Calu3 (cell line): ENCODE measurements at regions of chr5 and their contacts with region 1.

Region 1: DNA sequence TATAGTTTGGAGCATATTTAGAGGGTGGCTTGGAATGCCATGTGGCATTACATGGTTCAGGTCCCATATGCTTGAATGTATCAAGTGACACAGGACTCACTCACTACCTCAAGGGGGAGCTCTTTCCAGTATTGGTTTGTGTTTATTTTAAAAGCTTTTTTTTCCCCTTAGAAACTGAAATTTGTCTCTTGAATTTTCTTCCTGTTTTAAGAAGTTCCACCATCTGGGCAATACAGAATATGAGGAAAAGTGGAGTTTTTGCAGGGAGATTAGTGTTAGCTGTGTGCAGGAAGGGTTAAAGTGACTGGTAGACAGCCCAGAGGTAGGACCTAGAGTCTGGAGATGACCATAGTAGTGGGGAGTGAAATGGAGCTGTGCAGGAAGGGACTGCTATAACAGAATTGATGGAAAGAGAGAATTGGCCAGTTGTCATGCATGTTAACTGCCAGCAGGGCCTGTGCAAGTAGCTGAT is 36.6 kb downstream of the CTNNA1 start:
- DNase-seq: peak; percentile 12
- H3K4me3 Mint-ChIP-seq: no peak overlapping the region
- H3K27ac Mint-ChIP-seq: no peak overlapping the region
- H3K4me1 Mint-ChIP-seq: peaks cover 43% of the 10 kb centered on the region
- H3K27me3 Mint-ChIP-seq: no peaks in the 10 kb centered on the region
- CTCF ChIP-seq: peak; percentile 52

Region 2: GRCh38 chr5:138832218-138832617 is 42.4 kb after region 1 on chr5:
- CTCF ChIA-PET with region 1: no interaction called
- intact Hi-C with region 1: no loop called
- DNase-seq: no peak
- H3K4me3 Mint-ChIP-seq: no peak overlapping the region
- H3K27ac Mint-ChIP-seq: no peak overlapping the region
- H3K4me1 Mint-ChIP-seq: peaks cover 27% of the 10 kb centered on the region
- H3K27me3 Mint-ChIP-seq: no peaks in the 10 kb centered on the region
- CTCF ChIP-seq: no peak

Region 3: GRCh38 chr5:138844812-138845513 is 55.2 kb after region 1 on chr5:
- CTCF ChIA-PET with region 1: no interaction called
- intact Hi-C with region 1: no loop called
- DNase-seq: no peak
- H3K4me3 Mint-ChIP-seq: no peak overlapping the region
- H3K27ac Mint-ChIP-seq: no peak overlapping the region
- H3K4me1 Mint-ChIP-seq: peaks cover 53% of the 10 kb centered on the region
- H3K27me3 Mint-ChIP-seq: no peaks in the 10 kb centered on the region
- CTCF ChIP-seq: no peak

Region 4: DNA sequence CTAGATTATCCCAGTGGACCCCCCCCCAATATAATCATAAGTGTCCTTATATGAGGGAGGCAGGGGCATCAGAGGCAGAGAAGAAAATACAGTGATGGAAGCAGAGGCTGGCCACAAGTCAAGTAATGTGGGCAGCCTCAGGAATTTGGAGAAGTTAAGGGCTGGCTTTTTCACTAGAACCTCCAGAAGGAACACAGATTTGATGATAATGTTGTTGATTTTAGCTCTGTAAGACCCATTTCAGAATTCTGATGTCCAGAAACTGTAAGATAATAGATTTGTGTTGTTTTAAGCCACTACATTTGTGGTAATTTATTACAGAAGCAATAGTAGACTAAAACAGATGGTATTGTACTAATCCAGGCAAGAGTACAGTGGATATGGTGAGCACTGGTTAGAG is 121.6 kb after region 1 on chr5:
- CTCF ChIA-PET with region 1: no interaction called
- intact Hi-C with region 1: loop called (anchors 10 kb)
- DNase-seq: no peak
- H3K4me3 Mint-ChIP-seq: no peak overlapping the region
- H3K27ac Mint-ChIP-seq: peak overlapping the region; percentile 2
- H3K4me1 Mint-ChIP-seq: no peaks in the 10 kb centered on the region
- H3K27me3 Mint-ChIP-seq: no peaks in the 10 kb centered on the region
- CTCF ChIP-seq: no peak